PC-3 (cell line): ENCODE measurements at regions of chrX and their contacts with region 1.

Region 1: DNA sequence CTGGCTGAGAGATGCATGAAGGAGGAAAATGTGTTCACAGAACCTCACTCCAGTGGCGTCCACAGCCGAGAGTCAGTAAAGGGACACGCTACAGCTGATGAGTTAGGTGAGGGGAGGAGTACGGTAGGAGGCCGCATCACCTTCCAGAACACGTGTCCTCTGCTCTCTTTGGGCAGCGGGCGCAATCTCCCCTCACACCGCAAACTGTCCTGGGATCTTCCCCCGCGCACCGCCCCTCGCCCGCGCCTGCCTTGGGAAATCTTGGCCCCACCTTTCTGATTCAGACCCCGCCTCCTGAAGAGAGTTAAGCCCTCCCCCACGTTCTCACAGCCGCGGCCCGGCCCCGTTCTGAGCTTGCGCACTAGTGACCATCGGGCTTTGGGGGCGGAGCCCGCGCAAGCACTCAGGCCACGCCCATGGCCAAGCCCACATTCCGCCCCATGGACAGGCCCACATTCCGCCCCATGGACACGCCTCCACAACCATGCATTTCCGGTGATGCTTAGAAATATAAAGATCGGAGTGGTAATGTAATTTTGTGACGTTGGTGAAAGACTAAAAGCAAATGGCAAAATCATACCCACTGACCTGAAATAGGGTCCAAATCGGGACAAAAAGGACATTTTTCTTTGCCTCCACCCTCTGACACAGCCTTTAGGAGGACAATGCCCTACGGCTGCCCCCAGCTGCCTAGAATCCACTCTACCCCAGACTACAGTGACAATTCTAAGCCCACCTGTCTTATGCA is 13.3 kb downstream of the SMIM10 start:
- DNase-seq: peak; percentile 93
- ATAC-seq: peak; percentile 80
- H3K4me3 ChIP-seq: peak overlapping the region; percentile 69
- H3K27ac ChIP-seq: 0 out of 2 replicates have a peak overlapping the region, but pooled peaks have one; percentile 4
- H3K4me1 ChIP-seq: peaks cover 30% of the 10 kb centered on the region
- H3K27me3 ChIP-seq: no peaks in the 10 kb centered on the region
- CTCF ChIP-seq: no peak

Region 2: GRCh38 chrX:135050603-135051002 is 46.6 kb after region 1 on chrX:
- CTCF ChIA-PET with region 1: no interaction called
- POLR2A ChIA-PET with region 1: no interaction called
- intact Hi-C with region 1: loop called (anchors 1 kb)
- DNase-seq: no peak
- ATAC-seq: no peak
- H3K4me3 ChIP-seq: peak overlapping the region; percentile 72
- H3K27ac ChIP-seq: no peak overlapping the region
- H3K4me1 ChIP-seq: peaks cover 14% of the 10 kb centered on the region
- H3K27me3 ChIP-seq: no peaks in the 10 kb centered on the region
- CTCF ChIP-seq: no peak